ENCODE measurements at regions of chr3 and their contacts with region 1.

Region 1: DNA sequence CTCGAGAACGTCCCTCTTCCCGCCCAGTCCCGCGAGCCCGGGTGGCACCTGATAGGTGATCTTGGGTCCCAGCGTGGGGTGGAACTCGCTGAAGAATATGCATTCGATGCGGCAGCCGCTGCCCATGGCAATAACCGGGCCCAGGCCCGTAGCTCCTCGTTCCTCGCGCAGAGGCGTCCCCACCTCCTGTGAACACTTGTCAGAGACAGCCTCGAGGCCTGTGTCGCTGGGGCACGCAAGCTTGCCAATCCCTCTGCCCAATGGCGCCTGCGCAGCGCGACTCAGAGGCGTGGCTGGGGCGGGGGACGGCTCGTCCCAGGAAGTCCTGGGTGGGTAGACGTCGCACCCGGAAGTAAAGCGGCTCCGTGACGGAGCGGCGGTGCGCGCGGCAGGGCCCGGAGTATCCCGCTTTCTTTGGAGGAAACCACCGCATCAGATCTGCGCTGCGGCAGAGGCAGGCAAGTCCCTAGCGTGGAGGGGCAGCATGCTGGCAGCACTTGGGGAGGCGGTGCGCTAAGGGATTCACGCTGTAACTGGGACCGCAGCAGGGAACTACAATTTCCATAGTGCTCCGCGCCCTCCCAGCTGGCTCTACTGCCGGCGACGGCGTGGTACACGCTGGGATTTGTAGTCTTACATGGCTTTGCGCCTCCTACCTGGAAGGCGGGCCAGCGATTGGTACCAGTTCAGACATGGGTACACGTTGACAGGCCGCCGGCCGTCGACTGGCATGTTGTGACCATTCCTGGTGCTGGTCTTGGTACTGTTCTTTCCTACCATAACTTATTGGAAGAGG is at the starts of genes CYB561D2 and NPRL2:
- DNase-seq: peak; percentile 96
- H3K4me3 ChIP-seq: peak within 1 kb of the TSS; percentile 77
- H3K27ac ChIP-seq: peak within 1 kb of the TSS; percentile 63
- H3K4me1 ChIP-seq: peaks cover 29% of the 10 kb centered on the region
- CTCF ChIP-seq: no peak
- total RNA-seq, gene CYB561D2: 16.2 and 28.0 TPM in 2 replicates
- total RNA-seq, gene NPRL2: 38.6 and 52.5 TPM in 2 replicates

Region 2: GRCh38 chr3:50337191-50337841 is 13.4 kb before region 1 on chr3:
- CTCF ChIA-PET with region 1: interaction called, 7 read pairs
- POLR2A ChIA-PET with region 1: interaction called, 22 read pairs
- intact Hi-C with region 1: no loop called
- DNase-seq: peak; percentile 98
- H3K4me3 ChIP-seq: peak overlapping the region; percentile 90
- H3K27ac ChIP-seq: peak overlapping the region; percentile 86
- H3K4me1 ChIP-seq: peaks cover 63% of the 10 kb centered on the region
- CTCF ChIP-seq: no peak

Region 3: GRCh38 chr3:50388016-50388719 is 37.4 kb after region 1 on chr3:
- CTCF ChIA-PET with region 1: interaction called, 8 read pairs
- POLR2A ChIA-PET with region 1: no interaction called
- intact Hi-C with region 1: loop called (anchors 1 kb)
- DNase-seq: peak; percentile 26
- H3K4me3 ChIP-seq: no peak overlapping the region
- H3K27ac ChIP-seq: no peak overlapping the region
- H3K4me1 ChIP-seq: no peaks in the 10 kb centered on the region
- CTCF ChIP-seq: peak; percentile 70

Region 4: DNA sequence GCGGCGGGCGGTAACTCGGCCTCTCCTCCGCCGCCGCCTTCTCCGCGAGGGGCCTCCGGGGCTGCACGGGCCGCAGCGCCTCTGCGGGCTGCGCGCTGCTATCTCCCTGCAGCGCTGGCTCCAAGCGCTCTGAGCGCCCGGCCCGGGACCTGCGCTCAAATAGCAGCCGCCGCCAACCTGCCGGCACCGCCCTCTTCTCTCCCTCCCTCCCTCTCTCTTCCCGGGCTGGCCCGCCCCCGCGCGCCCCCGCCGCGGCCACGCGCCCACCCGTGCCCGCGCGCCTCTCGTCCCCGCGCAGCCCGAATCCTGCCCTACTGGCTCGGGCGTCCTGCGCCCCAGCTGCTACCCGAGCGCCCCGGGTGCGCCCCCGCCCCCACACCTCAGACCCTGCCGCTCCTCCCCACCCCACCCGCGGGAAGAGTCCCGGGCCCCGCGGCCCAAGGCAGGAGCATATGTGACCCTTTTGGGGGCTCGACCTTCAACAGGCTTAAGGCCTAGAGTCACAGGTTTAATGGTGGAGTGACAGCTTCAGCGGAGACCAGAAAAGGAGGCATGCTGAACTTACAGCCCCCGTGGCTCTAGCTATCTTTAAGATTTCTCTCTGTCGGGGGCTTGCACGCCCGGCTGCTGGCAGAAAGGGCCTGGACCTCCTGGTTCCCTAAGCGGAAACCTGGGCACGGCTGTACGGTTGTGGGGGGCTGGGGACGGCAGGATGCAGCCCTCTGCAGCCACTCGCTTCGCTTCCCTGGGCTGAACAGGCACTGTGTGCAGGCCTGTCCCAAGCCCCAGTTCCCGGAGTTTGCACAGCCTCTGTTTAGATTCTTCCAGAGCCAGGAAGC is 153.0 kb after region 1 on chr3 and contains the start of gene CACNA2D2:
- CTCF ChIA-PET with region 1: no interaction called
- POLR2A ChIA-PET with region 1: no interaction called
- intact Hi-C with region 1: no loop called
- DNase-seq: no peak
- H3K4me3 ChIP-seq: no peak within 1 kb of the TSS
- H3K27ac ChIP-seq: no peak within 1 kb of the TSS
- H3K4me1 ChIP-seq: no peaks in the 10 kb centered on the region
- CTCF ChIP-seq: no peak
- total RNA-seq, gene CACNA2D2: 0.09 TPM in 1 of 2 replicates, not detected in the other

Region 5: DNA sequence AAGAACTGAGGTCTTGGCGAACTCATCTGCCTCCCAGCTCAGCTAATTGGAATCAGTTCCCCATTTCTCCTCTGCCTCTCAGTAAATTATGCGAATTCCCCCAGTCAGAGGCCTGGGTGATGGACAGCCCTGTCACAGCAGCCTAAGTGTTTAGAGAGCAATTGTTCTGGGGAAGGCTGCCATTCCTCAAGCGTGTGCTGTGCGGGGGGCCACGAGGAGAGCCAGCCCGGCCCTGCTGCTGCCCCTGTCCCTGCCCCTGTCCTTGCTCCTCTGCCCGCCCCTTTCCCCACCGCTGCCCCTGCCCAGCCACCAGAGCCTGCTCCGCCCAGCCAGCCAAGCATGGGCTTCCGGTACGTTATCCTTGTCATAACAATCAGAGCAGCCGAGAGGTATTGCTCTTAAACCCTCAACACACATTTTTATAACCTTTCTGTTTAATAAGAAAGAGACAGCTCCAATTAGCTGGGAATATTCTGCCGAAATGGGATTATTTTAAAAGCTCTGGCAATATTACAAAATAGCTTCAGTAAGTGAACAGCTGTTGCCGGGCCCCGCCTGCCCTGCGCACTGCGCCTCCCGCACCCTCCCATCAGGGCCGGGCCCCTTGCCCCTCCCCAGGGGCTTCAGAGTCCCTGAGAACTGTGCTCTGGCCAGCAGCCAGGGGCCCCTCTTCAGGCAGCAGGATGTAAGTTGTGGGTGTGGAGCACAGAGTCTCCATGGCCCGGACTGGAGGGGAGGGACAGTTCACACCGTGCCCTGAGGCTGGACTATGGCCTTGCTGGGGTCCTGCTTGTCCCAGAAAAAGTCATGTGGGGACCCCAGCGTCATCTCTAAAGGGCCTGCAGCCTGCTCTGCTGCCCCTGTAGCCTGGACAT is 165.1 kb after region 1 on chr3:
- CTCF ChIA-PET with region 1: no interaction called
- POLR2A ChIA-PET with region 1: no interaction called
- intact Hi-C with region 1: no loop called
- DNase-seq: peak; percentile 13
- H3K4me3 ChIP-seq: no peak overlapping the region
- H3K27ac ChIP-seq: no peak overlapping the region
- H3K4me1 ChIP-seq: peaks cover 6% of the 10 kb centered on the region
- CTCF ChIP-seq: no peak

Region 6: DNA sequence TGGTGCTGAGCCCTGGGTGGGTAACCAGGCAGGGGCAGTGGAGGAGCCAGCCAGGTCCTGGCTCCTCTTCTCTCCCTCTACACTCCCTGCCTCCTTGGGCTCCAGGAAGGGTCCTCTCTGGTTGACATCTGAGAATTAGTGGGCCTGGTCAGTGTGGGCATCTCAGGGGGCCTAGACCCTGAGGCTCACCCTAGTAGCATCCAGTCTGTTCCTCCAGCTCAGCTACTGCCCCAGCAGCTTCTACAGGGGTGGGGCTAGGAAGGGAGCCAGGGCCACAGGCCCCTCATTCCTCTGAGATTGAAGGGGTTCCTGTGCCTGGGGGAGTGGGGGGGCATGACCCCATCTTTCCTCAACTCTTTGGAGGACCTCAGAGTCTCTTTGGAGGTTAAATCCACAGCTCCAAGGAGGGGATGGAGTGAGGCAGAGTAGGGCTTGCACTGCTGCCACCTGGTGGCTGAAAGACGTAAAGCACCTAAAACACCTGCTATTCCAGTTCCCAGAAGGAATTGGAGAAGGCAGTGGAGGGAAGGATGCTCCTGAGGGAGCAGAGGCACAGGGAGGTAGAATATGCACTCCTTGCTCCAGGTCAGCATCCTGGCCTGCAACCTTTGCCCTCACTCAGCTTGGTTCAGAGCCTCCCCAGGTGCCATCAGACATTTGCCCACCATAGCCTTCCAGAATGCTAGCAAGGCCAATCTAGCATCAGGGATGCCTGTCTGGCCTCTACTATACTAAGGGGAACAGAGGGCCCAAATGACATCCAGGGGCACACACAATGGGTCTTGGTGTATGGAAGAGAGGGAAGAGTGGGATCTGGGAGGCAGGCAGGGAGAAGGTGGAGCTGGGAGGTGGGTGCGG is 191.7 kb after region 1 on chr3:
- CTCF ChIA-PET with region 1: no interaction called
- POLR2A ChIA-PET with region 1: no interaction called
- intact Hi-C with region 1: loop called (anchors 2 kb)
- DNase-seq: peak; percentile 56
- H3K4me3 ChIP-seq: no peak overlapping the region
- H3K27ac ChIP-seq: no peak overlapping the region
- H3K4me1 ChIP-seq: no peaks in the 10 kb centered on the region
- CTCF ChIP-seq: peak; percentile 95

Region 7: DNA sequence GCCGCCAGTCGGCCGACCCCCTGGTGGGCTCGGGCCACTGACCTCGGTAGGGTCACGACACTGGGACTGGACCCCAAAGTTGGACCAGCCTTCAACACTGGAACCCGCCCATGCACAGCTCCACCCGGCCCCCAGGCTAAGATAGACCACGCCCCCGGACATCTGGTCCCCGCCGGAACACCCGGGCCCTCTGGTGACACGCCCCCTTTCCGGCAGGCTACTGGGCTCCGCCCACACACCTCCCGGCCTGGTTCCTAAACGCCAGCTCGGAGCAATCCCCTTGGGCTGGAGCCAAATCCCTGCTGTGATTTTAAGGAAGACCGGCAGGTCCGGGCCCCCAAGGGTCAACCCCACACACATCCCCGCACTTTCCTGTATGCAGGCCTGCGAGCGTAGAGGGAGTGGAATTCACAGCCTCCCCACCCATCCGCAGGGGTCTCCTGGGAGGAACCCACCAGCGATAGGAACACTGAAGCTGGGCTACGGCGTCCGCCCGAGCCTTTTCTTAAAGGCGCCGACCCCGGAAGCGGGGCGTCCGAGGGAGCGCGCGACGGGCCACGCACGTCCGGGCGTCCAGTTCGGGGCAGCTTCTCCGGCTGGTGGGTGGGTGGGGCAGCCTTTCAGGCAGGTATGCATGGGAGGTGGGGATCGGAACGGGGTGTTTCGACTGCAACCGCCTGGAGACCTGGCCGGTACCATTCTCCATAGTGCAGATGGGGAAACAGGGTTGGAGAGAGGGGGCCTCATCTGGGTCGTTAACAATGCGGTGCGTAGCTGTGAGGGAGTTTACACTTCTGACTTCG is 218.4 kb after region 1 on chr3 and contains the start of gene HEMK1:
- CTCF ChIA-PET with region 1: no interaction called
- POLR2A ChIA-PET with region 1: no interaction called
- intact Hi-C with region 1: loop called (anchors 5 kb)
- DNase-seq: peak; percentile 97
- H3K4me3 ChIP-seq: peak within 1 kb of the TSS; percentile 95
- H3K27ac ChIP-seq: peak within 1 kb of the TSS; percentile 55
- H3K4me1 ChIP-seq: peaks cover 25% of the 10 kb centered on the region
- CTCF ChIP-seq: no peak
- total RNA-seq, gene HEMK1: 18.9 and 19.3 TPM in 2 replicates